ENCODE measurements at regions of chrX and their contacts with region 1.

Region 1: GRCh38 chrX:71254092-71254941 is at the start of gene ZMYM3:
- DNase-seq: peak; percentile 85
- ATAC-seq: peak; percentile 79
- H3K4me3 ChIP-seq: peak within 1 kb of the TSS; percentile 65 to 84 (median 80)
- H3K4me3 Mint-ChIP-seq: peak within 1 kb of the TSS; percentile 88
- H3K27ac ChIP-seq: peak within 1 kb of the TSS; percentile 84 to 87
- H3K27ac Mint-ChIP-seq: peak within 1 kb of the TSS; percentile 89
- H3K4me1 ChIP-seq: peaks cover 15 to 22% of the 10 kb centered on the region in 2 donors
- H3K4me1 Mint-ChIP-seq: peaks cover 23% of the 10 kb centered on the region
- H3K27me3 ChIP-seq: no peaks in the 10 kb centered on the region
- H3K27me3 Mint-ChIP-seq: no peaks in the 10 kb centered on the region
- CTCF ChIP-seq: no peak
- total RNA-seq, gene ZMYM3: 40.0 and 40.6 TPM in 2 replicates

Region 2: GRCh38 chrX:71095543-71095911 is 158.8 kb before region 1 on chrX and contains the start of gene FOXO4:
- CTCF ChIA-PET with region 1: no interaction called
- POLR2A ChIA-PET with region 1: no interaction called
- intact Hi-C with region 1: loop called (anchors 10 kb)
- DNase-seq: peak; percentile 87
- ATAC-seq: peak; percentile 85
- H3K4me3 ChIP-seq: peak within 1 kb of the TSS; percentile 49 to 73 (median 61)
- H3K4me3 Mint-ChIP-seq: peak within 1 kb of the TSS; percentile 98
- H3K27ac ChIP-seq: peak within 1 kb of the TSS; percentile 43 to 61
- H3K27ac Mint-ChIP-seq: peak within 1 kb of the TSS; percentile 99
- H3K4me1 ChIP-seq: peaks cover 13 to 28% of the 10 kb centered on the region in 2 donors
- H3K4me1 Mint-ChIP-seq: peaks cover 26% of the 10 kb centered on the region
- H3K27me3 ChIP-seq: no peaks in the 10 kb centered on the region
- H3K27me3 Mint-ChIP-seq: no peaks in the 10 kb centered on the region
- CTCF ChIP-seq: no peak
- total RNA-seq, gene FOXO4: 41.4 and 48.7 TPM in 2 replicates

Region 3: DNA sequence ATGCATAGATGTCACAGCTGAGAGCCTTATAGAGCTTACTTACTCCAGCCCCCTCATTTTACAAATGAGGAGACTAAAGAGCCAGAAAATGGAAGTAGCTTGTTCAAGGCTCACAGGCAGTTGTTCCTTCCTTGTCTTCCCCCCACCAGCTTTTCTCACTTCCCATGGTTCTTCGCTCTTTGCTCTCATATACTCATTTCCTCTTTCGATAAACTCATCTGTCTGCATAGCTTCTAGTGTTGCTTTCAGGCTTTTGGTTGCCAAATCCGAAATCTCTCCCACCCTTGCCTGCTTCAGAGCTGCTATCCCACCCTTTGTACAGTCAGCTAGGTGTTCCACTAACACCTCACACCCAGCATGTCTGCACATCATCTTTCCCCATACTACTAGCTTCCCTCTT is 56.3 kb before region 1 on chrX:
- CTCF ChIA-PET with region 1: interaction called, 4 read pairs
- POLR2A ChIA-PET with region 1: interaction called, 7 read pairs
- intact Hi-C with region 1: loop called (anchors 1 kb)
- DNase-seq: peak; percentile 68
- ATAC-seq: peak; percentile 84
- H3K4me3 ChIP-seq: peak overlapping the region; percentile 19 to 68 (median 59)
- H3K4me3 Mint-ChIP-seq: peak overlapping the region; percentile 97
- H3K27ac ChIP-seq: peak overlapping the region; percentile 25 to 53
- H3K27ac Mint-ChIP-seq: peak overlapping the region; percentile 92
- H3K4me1 ChIP-seq: peaks cover 15 to 21% of the 10 kb centered on the region in 2 donors
- H3K4me1 Mint-ChIP-seq: peaks cover 28% of the 10 kb centered on the region
- H3K27me3 ChIP-seq: no peaks in the 10 kb centered on the region
- H3K27me3 Mint-ChIP-seq: no peaks in the 10 kb centered on the region
- CTCF ChIP-seq: no peak

Region 4: DNA sequence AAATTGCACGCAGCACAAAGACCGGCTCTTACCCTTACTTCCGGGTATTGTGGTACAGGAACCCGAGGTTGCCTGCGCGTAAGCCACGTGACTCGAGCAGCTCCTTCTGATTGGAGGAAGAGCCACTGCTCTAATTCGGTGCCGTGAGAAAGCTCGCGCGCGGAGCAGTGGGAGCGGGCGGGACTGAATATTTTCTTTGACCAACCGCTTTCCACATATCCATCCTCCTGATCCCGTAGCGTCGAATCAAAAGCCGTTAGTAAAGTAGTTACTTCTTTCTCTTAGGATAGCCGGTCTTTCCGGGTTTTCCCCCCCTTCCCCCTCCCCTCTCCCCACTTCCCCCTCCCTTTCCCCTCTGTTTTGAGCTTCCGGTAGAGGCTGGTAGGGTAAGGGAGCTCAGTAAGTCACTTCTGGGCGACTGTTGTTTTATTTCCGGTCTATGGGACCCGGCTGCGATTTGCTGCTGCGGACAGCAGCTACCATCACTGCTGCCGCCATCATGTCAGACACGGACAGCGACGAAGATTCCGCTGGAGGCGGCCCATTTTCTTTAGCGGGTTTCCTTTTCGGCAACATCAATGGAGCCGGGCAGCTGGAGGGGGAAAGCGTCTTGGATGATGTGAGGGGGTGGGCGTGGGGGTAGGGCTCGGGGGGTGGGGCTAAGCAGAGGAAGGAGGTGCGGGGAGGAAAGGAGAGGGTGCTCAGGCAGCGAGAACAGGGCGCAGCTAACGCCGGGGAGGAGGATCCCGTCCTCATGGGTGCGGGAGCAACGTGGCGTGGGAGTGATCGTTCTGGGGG is 111.8 kb after region 1 on chrX and contains the start of gene TAF1:
- CTCF ChIA-PET with region 1: interaction called, 3 read pairs
- POLR2A ChIA-PET with region 1: interaction called, 43 read pairs
- intact Hi-C with region 1: no loop called
- DNase-seq: peak; percentile 94
- ATAC-seq: peak; percentile 90
- H3K4me3 ChIP-seq: peak within 1 kb of the TSS; percentile 67 to 78 (median 73)
- H3K4me3 Mint-ChIP-seq: peak within 1 kb of the TSS; percentile 97
- H3K27ac ChIP-seq: peak within 1 kb of the TSS; percentile 80 to 95
- H3K27ac Mint-ChIP-seq: peak within 1 kb of the TSS; percentile 99
- H3K4me1 ChIP-seq: peaks cover 12 to 24% of the 10 kb centered on the region in 2 donors
- H3K4me1 Mint-ChIP-seq: peaks cover 24% of the 10 kb centered on the region
- H3K27me3 ChIP-seq: no peaks in the 10 kb centered on the region
- H3K27me3 Mint-ChIP-seq: no peaks in the 10 kb centered on the region
- CTCF ChIP-seq: no peak
- total RNA-seq, gene TAF1: 93.5 and 97.5 TPM in 2 replicates

Measured in B cell (primary cell).